Heart right ventricle (tissue), 16 donors: ENCODE measurements at regions of chr6 and their contacts with region 1.

Region 1: GRCh38 chr6:54018722-54019121 is 92.5 kb upstream of the MLIP start:
- DNase-seq: no peak
- ATAC-seq: peak; percentile 65 to 95 (median 90)
- H3K4me3 ChIP-seq: peak overlapping the region in 9 of 10 donors; percentile 32 to 56 (median 45)
- H3K27ac ChIP-seq: peak overlapping the region; percentile 60 to 87 (median 76)
- H3K4me1 ChIP-seq: peaks cover 0 to 8% (median 0%) of the 10 kb centered on the region in 9 donors
- H3K27me3 ChIP-seq: no peaks in the 10 kb centered on the region
- CTCF ChIP-seq: no peak

Region 2: GRCh38 chr6:53998303-53998702 is 20.4 kb before region 1 on chr6:
- intact Hi-C with region 1: no loop called
- DNase-seq: no peak
- ATAC-seq: peak in 1 of 8 donors; percentile 29
- H3K4me3 ChIP-seq: no peak overlapping the region
- H3K27ac ChIP-seq: no peak overlapping the region
- H3K4me1 ChIP-seq: peaks cover 0 to 20% (median 6%) of the 10 kb centered on the region in 9 donors
- H3K27me3 ChIP-seq: no peaks in the 10 kb centered on the region
- CTCF ChIP-seq: no peak

Region 3: DNA sequence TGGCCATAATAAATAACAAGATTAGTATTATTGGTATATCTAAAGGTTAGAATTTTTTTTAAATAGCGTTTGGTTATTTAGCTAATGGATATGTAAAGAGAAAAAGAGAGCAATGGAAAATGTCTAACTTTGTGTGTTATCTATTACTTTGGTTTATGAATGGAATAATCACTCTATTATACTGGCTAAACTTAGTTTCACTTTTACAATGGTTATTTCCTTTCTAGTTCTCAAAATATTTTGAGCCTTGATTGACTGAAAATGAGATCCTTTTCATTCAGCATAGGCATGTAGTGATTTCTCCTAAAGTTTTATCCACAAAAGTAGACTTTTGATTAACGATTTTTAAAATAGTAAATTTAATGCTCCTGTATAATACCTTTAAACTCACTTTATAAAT is 41.0 kb after region 1 on chr6:
- intact Hi-C with region 1: loop called in 1 of 10 experiments (anchors 5 kb)
- DNase-seq: no peak
- ATAC-seq: no peak
- H3K4me3 ChIP-seq: no peak overlapping the region
- H3K27ac ChIP-seq: peak overlapping the region in 8 of 10 donors; percentile 45 to 84 (median 68)
- H3K4me1 ChIP-seq: peaks cover 0 to 64% (median 42%) of the 10 kb centered on the region in 9 donors
- H3K27me3 ChIP-seq: no peaks in the 10 kb centered on the region
- CTCF ChIP-seq: no peak